ENCODE measurements at regions of chr5 and their contacts with region 1.

Region 1: DNA sequence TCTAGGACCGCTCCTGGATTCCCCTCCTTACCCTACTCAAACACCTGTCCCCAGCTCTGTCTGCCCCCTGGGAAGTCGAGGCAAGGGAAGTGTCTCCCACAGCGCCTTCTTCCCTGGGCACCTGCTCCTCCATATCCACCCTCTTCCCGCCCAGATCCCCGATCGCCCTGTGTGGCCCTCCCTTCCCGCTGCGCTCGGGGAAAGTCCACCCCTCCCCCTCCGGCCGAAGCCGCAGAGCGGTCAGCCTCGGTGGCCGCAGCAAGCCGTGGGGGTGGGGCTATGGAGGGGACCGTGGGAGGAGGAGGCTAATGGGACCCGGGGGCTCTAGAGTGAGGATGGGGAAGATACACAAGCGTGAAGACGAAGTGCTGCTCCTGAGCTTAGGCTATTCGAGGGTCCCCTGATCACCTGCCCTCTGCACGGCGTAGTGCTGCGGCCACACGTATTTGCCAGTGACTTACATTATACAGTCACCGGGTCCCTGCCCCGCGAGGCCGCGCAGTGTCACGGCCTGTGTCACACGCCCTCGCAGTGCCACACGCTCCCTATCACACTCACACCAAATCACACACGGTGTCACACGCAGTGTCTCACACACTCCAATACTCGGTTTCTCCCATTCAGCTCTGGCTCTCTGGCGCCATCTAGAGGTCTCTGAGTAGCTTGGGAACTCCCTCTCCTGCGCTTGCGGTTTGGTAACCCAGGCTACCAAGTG is 658 bp upstream of the PCDH1 start:
- DNase-seq: peak; percentile 91 to 92 (median 92)
- ATAC-seq: peak; percentile 81 to 89
- H3K4me3 ChIP-seq: peak overlapping the region; percentile 90
- H3K27ac ChIP-seq: peak overlapping the region; percentile 83
- H3K4me1 ChIP-seq: peaks cover 3% of the 10 kb centered on the region
- H3K27me3 ChIP-seq: no peaks in the 10 kb centered on the region

Region 2: DNA sequence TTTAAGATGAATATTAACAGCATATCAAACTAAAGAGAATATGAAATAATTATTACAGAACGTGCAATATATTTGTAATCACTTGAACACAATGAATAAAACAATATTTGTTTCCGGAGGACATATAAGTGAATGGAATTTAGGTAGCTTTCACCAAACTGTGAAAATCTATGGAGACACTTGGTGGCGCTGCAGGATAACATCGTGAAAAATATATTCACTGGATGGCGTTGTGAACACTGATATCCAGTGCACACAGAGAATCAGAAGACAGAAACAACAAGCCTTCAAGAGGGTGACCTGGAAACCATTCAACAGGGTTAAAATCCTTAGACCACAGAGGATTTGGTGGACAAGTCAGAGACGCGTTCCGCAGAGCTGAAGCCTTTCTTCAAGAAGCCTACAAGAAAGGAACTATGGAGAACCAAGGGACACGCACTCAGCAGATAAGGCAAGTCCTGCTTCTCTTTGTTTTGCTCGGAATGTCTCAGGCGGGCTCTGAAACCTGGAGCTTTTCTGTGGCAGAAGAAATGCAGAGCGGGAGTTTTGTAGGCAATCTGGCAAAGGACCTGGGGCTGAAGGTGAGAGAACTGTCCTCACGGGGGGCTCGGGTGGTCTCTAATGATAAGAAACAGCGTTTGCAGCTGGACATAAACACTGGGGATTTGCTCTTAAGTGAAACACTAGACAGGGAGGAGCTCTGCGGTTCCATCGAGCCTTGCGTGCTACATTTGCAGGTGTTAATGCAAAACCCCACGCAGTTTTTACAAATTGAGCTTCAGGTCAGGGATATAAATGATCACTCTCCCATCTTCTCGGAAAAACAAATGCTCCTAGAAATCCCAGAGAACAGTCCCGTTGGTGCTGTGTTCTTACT is 679.3 kb before region 1 on chr5 and contains the start of gene PCDHB11:
- intact Hi-C with region 1: no loop called
- DNase-seq: no peak
- ATAC-seq: no peak
- H3K4me3 ChIP-seq: no peak within 1 kb of the TSS
- H3K27ac ChIP-seq: no peak within 1 kb of the TSS
- H3K4me1 ChIP-seq: no peaks in the 10 kb centered on the region
- H3K27me3 ChIP-seq: no peaks in the 10 kb centered on the region
- total RNA-seq, gene PCDHB11: 1.9 to 2.9 (median 2.5) TPM

Region 3: DNA sequence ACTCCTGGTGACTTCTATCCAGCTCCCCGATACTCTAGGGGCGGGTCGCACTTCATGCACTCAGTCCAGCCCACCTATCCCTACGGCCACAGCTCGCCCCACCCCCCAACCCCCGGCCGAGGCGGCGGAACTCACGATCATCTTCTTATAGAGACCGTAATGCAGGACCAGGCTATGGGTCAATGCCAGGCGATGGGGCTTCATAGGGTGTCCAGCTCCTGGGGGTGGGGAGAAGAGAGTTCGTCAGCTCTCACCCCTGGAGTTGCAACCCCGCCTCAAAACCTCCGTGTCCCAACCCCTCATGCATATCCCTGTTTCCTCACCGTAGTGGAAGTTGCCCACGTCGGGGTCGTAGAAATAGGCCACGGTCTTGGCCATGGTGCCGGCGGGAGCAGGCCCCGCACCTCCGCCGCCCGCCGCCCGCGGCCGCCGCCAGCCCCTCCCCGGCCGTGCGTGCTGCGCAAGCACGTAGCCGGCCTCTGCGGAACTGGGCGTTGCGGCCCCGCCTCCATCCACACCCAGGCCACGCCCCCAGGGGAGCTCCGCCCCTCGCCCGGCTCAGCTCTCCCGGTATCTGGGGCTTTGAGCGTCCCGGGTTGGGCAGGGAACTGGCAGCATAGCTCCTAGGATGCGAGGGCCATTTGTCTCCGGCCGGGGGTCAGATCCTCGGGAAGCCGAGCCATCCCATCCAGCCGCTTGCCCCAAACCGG is 242.3 kb before region 1 on chr5 and contains the starts of genes HDAC3 and RELL2:
- intact Hi-C with region 1: no loop called
- DNase-seq: peak; percentile 94 to 98 (median 98)
- ATAC-seq: peak; percentile 96 to 98
- H3K4me3 ChIP-seq: peak within 1 kb of the TSS; percentile 90
- H3K27ac ChIP-seq: peak within 1 kb of the TSS; percentile 38
- H3K4me1 ChIP-seq: peaks cover 5% of the 10 kb centered on the region
- H3K27me3 ChIP-seq: no peaks in the 10 kb centered on the region
- total RNA-seq, gene HDAC3: 25.4 to 35.0 (median 28.0) TPM
- total RNA-seq, gene RELL2: 1.2 to 2.0 (median 1.3) TPM

Region 4: DNA sequence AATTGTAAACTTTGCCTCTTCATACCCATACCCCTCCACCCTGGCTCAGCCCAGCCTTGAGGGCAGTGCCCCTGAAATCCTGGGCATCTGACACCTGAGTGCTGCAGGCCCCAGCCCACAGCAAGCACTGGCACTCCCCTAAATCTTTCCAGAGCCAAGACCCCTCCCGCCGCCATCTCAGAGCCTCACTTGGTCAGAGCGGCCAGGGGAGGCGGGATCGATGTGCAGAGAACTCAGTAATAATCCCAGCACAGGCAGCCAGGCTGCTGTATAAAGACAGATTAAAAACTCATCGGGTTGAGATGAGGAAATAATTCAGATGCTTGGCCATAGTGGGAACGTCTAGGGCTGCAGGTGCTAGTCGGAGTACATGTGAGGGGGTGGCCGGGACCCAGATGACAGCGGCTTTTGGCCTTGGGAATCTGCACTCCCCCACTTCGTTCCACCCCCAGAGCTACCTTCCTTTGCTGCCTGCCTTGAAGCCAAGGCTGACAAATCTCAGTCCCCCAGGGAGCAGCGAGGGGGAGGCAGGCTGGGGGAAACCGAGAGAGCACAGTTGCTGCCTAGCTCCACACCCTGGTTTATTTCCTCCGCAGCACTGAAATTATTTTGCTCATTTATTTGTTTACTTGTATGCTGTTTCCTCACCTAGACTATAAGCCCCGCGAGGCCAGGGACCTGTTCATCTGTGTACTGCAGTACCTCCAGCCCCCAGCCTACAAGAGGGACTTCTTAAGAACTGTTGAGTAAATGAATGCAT is 177.3 kb before region 1 on chr5:
- intact Hi-C with region 1: loop called (anchors 2 to 5 kb)
- DNase-seq: no peak
- ATAC-seq: peak in 1 of 2 donors; percentile 26
- H3K4me3 ChIP-seq: no peak overlapping the region
- H3K27ac ChIP-seq: no peak overlapping the region
- H3K4me1 ChIP-seq: no peaks in the 10 kb centered on the region
- H3K27me3 ChIP-seq: no peaks in the 10 kb centered on the region

Region 5: GRCh38 chr5:141805874-141806595 is 72.8 kb before region 1 on chr5:
- intact Hi-C with region 1: loop called in 1 of 4 experiments (anchors 10 kb)
- DNase-seq: peak; percentile 56 to 73 (median 64)
- ATAC-seq: peak; percentile 84 to 94
- H3K4me3 ChIP-seq: no peak overlapping the region
- H3K27ac ChIP-seq: peak overlapping the region; percentile 83
- H3K4me1 ChIP-seq: peaks cover 1% of the 10 kb centered on the region
- H3K27me3 ChIP-seq: no peaks in the 10 kb centered on the region

Region 6: DNA sequence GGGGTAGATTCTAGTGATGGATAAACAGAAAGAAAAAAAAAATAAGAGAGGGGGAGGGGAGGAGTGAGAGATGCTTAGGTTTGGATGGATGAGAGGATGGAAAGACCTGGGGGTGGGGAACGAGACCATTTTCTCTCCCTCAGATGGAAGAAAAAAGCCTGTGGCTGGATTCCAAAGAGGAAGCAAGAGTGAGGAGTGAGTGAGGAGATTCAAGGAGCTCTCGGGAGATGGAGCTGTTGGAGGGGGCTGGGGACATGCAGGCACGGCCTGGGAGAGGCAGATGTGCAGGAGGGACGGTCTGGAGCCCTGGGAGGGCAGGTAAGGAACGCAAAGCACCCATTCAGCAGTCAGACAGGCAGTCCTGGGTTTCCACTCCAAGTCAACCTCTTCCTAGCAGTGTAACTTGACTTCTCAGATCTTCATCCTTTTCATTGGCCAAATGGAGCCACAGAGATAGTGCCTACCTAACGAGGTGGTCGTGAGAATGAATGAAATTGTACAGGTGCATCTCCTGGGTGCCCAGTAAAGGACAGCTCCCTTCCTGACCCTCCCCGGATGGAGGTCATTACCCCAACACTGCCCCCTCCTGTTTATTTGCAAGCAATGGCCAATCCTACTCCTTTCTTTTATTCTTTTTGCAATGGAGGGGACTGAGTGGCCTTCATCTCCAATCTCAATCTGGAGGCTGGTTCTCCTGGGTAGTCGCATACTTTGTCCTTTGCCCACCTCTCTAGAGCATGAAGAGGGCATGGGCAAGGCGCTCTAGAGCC is 52.9 kb before region 1 on chr5:
- intact Hi-C with region 1: loop called in 1 of 4 experiments (anchors 5 kb)
- DNase-seq: no peak
- ATAC-seq: no peak
- H3K4me3 ChIP-seq: no peak overlapping the region
- H3K27ac ChIP-seq: no peak overlapping the region
- H3K4me1 ChIP-seq: peaks cover 8% of the 10 kb centered on the region
- H3K27me3 ChIP-seq: no peaks in the 10 kb centered on the region

Region 7: DNA sequence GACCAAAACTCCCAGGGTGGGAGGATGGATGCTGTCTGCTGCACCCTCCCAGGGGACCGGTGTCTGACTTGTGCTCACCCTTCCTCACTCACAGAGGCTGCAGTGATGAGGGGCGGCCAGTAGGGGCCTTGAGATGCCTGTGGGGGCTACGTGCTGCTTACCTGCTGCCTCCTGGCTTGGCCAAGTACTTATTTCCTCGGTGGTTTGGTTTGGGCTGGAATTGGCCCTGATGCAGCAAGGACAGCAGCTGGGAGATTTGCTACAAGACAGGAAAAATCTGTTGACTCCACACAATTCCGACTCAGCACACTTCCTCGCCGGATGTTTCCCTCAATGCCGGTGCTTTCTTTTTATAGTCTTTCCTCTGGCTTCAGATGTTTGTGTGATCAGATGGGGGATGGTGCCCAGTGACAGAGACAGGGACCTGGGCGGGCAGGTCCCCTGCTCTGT is 72.5 kb after region 1 on chr5:
- intact Hi-C with region 1: loop called in 1 of 4 experiments (anchors 10 kb)
- DNase-seq: peak in 1 of 3 donors; percentile 55
- ATAC-seq: peak; percentile 4 to 25
- H3K4me3 ChIP-seq: no peak overlapping the region
- H3K27ac ChIP-seq: no peak overlapping the region
- H3K4me1 ChIP-seq: peaks cover 6% of the 10 kb centered on the region
- H3K27me3 ChIP-seq: no peaks in the 10 kb centered on the region

Region 8: DNA sequence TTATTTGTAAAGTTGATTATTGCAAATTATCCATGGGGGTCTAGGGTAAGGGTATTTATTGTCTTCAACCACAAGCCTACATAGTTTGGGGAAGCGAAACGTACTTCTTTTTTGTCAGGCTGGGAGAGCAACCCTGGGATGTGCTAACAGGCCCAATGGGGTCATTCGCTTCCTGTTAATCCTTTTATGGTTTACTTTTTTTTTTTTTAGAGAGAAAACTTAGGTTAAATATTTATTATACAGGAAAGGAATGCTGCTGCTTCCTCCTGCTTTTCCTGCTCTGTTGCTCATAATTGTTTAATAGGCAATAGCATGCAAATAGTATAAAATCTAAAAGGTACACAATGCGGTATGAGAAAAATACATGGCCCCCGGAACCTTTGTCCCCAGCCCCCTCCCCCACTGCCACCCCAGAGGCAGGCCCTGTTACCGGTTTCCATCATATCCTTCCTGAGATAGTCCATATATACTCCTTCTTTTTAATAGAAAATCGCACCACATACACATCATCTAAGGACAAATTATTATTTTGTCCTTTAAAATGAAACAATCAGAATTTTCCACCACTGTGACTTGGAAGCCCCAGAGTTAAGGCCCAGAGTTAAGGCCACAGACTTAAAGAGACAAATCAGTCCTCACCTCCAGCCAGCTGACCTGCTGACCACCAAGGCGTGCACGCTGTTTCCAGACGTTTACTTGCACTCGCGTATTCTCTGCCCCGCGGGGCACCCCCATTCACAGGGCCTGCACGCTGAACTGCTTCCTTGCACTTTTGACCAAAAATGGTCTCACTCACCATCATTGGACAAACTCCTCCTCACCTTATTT is 313.6 kb after region 1 on chr5:
- intact Hi-C with region 1: no loop called
- DNase-seq: no peak
- ATAC-seq: no peak
- H3K4me3 ChIP-seq: no peak overlapping the region
- H3K27ac ChIP-seq: no peak overlapping the region
- H3K4me1 ChIP-seq: no peaks in the 10 kb centered on the region
- H3K27me3 ChIP-seq: no peaks in the 10 kb centered on the region

Measured in right cardiac atrium (tissue), 5 donors.